Vagina (tissue), 2 donors: ENCODE measurements at regions of chr1 and their contacts with region 1.

Region 1: GRCh38 chr1:9867408-9868243 is 42.4 kb downstream of the CTNNBIP1 start:
- DNase-seq: no peak
- H3K4me3 ChIP-seq: no peak overlapping the region
- H3K27ac ChIP-seq: no peak overlapping the region
- H3K4me1 ChIP-seq: peaks cover 48% of the 10 kb centered on the region
- H3K27me3 ChIP-seq: no peaks in the 10 kb centered on the region
- CTCF ChIP-seq: peak; percentile 79 to 97 (median 95)
- POLR2A ChIP-seq: no peak

Region 2: GRCh38 chr1:9629445-9630201 is 238.0 kb before region 1 on chr1:
- intact Hi-C with region 1: loop called (anchors 5 kb)
- DNase-seq: no peak
- H3K4me3 ChIP-seq: peak overlapping the region in 1 of 2 donors; percentile 2
- H3K27ac ChIP-seq: peak overlapping the region; percentile 23
- H3K4me1 ChIP-seq: peaks cover 13% of the 10 kb centered on the region
- H3K27me3 ChIP-seq: no peaks in the 10 kb centered on the region
- CTCF ChIP-seq: no peak
- POLR2A ChIP-seq: no peak

Region 3: GRCh38 chr1:9724706-9725476 is 142.7 kb before region 1 on chr1:
- intact Hi-C with region 1: loop called (anchors 10 kb)
- DNase-seq: no peak
- H3K4me3 ChIP-seq: no peak overlapping the region
- H3K27ac ChIP-seq: no peak overlapping the region
- H3K4me1 ChIP-seq: no peaks in the 10 kb centered on the region
- H3K27me3 ChIP-seq: no peaks in the 10 kb centered on the region
- CTCF ChIP-seq: peak; percentile 40 to 51 (median 46)
- POLR2A ChIP-seq: no peak

Region 4: DNA sequence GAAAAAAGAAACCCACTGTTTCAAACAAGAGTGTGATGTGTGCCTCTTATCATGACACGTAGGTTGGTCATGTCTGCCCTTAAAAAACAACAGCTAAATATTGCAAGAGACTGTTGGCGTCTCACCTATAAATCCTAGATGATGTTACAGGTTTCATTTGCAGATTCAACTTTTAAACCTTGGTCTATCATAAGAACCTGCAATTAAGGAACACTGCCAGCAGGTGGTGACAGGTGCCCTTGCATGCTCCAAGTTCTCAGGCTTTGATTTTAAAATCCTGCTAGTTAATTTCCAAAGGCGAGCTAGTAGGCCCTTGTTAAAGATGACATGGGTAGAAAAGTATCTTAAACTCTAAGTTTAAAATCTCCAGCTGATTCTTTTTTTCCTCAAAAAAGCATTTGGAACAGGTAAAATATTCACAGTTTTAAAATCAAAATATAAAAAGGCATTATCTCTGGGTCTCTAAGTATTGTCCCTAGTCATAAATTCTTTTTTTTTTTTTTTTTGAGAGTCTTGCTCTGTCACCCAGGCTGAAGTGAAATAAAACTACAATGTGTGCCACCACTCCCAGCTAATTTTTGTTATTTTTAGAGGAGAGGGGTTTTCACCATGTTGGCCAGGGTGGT is 83.0 kb before region 1 on chr1:
- intact Hi-C with region 1: loop called (anchors 5 kb)
- DNase-seq: no peak
- H3K4me3 ChIP-seq: no peak overlapping the region
- H3K27ac ChIP-seq: no peak overlapping the region
- H3K4me1 ChIP-seq: peaks cover 31% of the 10 kb centered on the region
- H3K27me3 ChIP-seq: no peaks in the 10 kb centered on the region
- CTCF ChIP-seq: peak; percentile 35 to 48 (median 44)
- POLR2A ChIP-seq: no peak